Mammary epithelial cell (primary cell): ENCODE measurements at regions of chr15 and their contacts with region 1.

Region 1: GRCh38 chr15:43185157-43186017 is at the start of gene CCNDBP1:
- DNase-seq: peak; percentile 77
- H3K4me3 ChIP-seq: peak within 1 kb of the TSS; percentile 60 to 86 (median 74)
- H3K27ac ChIP-seq: peak within 1 kb of the TSS; percentile 22
- H3K4me1 ChIP-seq: peaks cover 4% of the 10 kb centered on the region
- H3K27me3 ChIP-seq: no peaks in the 10 kb centered on the region
- CTCF ChIP-seq: peak; percentile 10 to 51
- total RNA-seq, gene CCNDBP1: 41.3 to 82.5 TPM

Region 2: DNA sequence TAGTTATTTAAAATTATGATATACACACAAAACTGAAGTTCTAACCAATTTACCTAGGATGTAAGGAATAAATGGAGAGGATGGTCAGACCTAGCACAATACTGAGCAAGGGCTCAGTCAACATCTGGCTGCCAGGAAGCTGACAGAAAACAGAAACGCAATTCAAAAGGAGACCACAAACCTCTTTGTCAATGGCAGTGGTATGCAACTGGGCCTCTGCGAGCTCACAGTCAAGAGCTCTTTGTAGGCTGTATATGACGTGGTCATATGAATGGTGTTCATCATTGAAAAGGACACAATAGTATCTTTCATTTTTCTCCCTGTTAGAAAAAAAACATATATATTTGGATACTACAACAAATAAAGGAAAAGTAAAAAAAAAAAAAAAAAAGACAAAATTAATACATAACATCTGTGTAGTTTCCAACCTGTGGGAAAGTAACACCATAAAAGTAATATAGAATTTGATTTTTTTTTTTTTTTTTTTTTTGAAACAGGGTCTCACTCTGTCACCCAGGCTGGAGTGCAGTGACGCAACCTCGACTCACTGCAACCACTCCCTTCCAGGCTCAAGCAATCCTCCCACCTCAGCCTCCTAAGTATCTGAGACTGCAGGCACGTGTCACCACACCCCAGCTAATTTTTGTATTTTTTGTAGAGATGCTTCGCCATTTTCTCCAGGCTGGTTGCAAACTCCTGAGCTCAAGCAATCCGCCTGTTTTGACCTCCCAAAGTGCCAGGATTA is 117.5 kb before region 1 on chr15:
- CTCF ChIA-PET with region 1: interaction called, 19 read pairs
- dilution Hi-C with region 1: no loop called
- in situ Hi-C with region 1: no loop called
- intact Hi-C with region 1: no loop called
- DNase-seq: peak; percentile 90
- H3K4me3 ChIP-seq: no peak overlapping the region
- H3K27ac ChIP-seq: peak overlapping the region; percentile 42
- H3K4me1 ChIP-seq: no peaks in the 10 kb centered on the region
- H3K27me3 ChIP-seq: no peaks in the 10 kb centered on the region
- CTCF ChIP-seq: no peak

Region 3: DNA sequence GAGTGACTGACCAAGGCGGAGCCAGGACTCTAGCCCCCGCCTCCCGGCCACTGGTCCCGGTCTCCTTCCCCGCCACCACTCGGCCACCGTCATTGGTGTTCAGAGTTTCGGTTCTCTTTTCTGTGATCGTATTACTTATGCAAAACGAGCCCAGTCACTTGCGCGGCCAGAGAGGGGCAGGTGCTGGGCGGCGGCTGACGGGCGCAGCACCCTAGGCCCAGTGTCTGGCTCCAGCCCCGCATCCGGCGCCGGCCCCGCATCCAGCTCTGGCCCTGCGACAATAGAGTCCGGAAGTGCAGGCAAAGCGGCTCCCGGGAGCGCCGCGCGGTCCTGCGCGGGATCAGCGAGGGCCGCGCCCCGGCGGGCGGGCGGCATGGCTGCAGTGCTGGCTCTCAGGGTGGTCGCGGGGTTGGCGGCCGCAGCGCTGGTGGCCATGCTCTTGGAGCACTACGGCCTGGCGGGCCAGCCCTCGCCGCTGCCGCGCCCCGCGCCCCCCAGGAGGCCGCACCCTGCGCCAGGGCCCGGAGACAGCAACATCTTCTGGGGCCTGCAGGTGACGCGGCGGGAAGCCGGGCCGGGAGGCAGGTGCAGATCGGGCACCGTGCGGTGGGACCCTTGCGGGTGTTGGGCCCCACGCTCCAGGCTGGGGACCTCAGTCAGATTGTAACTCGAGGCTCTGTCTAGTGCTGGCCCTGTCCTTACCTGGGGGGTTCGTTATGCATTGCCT is 51.8 kb before region 1 on chr15 and contains the start of gene TMEM62:
- CTCF ChIA-PET with region 1: no interaction called
- dilution Hi-C with region 1: no loop called
- in situ Hi-C with region 1: no loop called
- intact Hi-C with region 1: loop called (anchors 1 kb)
- DNase-seq: peak; percentile 82
- H3K4me3 ChIP-seq: peak within 1 kb of the TSS; percentile 35 to 78 (median 66)
- H3K27ac ChIP-seq: peak within 1 kb of the TSS; percentile 74
- H3K4me1 ChIP-seq: peaks cover 9% of the 10 kb centered on the region
- H3K27me3 ChIP-seq: no peaks in the 10 kb centered on the region
- CTCF ChIP-seq: peak in 1 of 2 donors; percentile 0
- total RNA-seq, gene TMEM62: 13.3 to 14.8 TPM

Region 4: GRCh38 chr15:43225201-43225949 is 40.0 kb after region 1 on chr15:
- CTCF ChIA-PET with region 1: no interaction called
- dilution Hi-C with region 1: no loop called
- in situ Hi-C with region 1: no loop called
- intact Hi-C with region 1: loop called (anchors 2 kb)
- DNase-seq: peak; percentile 58
- H3K4me3 ChIP-seq: no peak overlapping the region
- H3K27ac ChIP-seq: no peak overlapping the region
- H3K4me1 ChIP-seq: no peaks in the 10 kb centered on the region
- H3K27me3 ChIP-seq: no peaks in the 10 kb centered on the region
- CTCF ChIP-seq: peak; percentile 87 to 88